ENCODE measurements at regions of chr9 and their contacts with region 1.

Region 1: GRCh38 chr9:76810377-76810957 is 46.2 kb downstream of the PCA3 start:
- DNase-seq: no peak
- H3K4me3 Mint-ChIP-seq: no peak overlapping the region
- H3K27ac Mint-ChIP-seq: no peak overlapping the region
- H3K4me1 Mint-ChIP-seq: no peaks in the 10 kb centered on the region
- H3K27me3 Mint-ChIP-seq: peaks cover 3% of the 10 kb centered on the region

Region 2: DNA sequence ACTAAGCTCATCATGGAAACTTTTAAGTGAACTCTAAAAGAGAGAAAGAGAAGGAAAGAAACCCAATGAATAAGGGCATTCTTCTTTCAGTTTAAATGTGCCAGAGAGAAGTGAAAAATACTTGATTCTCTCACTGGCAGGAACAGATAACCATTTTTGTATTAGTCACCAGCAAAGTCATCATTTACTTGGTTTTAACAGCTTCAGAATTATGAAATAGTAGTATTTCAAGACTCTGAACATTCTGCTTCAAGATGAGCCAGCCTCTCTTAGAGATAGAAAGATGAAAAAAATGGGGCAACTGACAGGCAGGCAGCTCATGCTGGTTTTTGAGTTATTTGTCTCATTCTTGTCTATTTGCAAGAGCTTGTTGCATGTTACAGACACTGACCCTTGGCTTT is 248.0 kb before region 1 on chr9:
- intact Hi-C with region 1: no loop called
- DNase-seq: no peak
- H3K4me3 Mint-ChIP-seq: no peak overlapping the region
- H3K27ac Mint-ChIP-seq: peak overlapping the region; percentile 43
- H3K4me1 Mint-ChIP-seq: peaks cover 23% of the 10 kb centered on the region
- H3K27me3 Mint-ChIP-seq: peaks cover 4% of the 10 kb centered on the region

Region 3: GRCh38 chr9:77011973-77012821 is 201.7 kb after region 1 on chr9:
- intact Hi-C with region 1: loop called (anchors 1 kb)
- DNase-seq: peak; percentile 58
- H3K4me3 Mint-ChIP-seq: peak overlapping the region; percentile 14
- H3K27ac Mint-ChIP-seq: no peak overlapping the region
- H3K4me1 Mint-ChIP-seq: peaks cover 7% of the 10 kb centered on the region
- H3K27me3 Mint-ChIP-seq: peaks cover 70% of the 10 kb centered on the region

Region 4: DNA sequence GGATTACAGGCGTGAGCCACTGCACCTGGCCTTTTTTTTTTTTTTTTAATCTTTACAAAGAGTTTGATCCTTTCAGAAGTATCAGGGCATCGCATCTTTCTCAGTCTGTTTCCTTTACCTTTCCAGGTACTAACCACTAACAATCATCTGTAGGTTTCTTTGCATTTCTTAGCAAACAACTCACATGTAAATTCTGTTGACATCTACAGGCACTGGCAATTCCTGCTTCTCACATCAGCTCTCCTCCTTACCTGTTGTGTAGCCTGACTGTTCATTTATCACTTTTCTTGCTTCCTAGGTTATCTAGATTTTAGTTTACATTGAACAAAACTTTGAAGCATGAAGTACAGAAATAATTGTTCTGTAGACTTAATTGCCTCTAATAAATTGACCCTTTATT is 339.4 kb after region 1 on chr9:
- intact Hi-C with region 1: loop called (anchors 2 kb)
- DNase-seq: no peak
- H3K4me3 Mint-ChIP-seq: no peak overlapping the region
- H3K27ac Mint-ChIP-seq: no peak overlapping the region
- H3K4me1 Mint-ChIP-seq: no peaks in the 10 kb centered on the region
- H3K27me3 Mint-ChIP-seq: peaks cover 12% of the 10 kb centered on the region